ENCODE measurements at regions of chr20 and their contacts with region 1.

Region 1: GRCh38 chr20:25623736-25624499 is at the start of gene NANP:
- DNase-seq: peak; percentile 87 to 94 (median 88)
- ATAC-seq: peak; percentile 89
- H3K4me3 ChIP-seq: peak within 1 kb of the TSS; percentile 59
- H3K27ac ChIP-seq: peak within 1 kb of the TSS; percentile 94
- H3K4me1 ChIP-seq: peaks cover 10 to 21% of the 10 kb centered on the region in 2 experiments; a peak in 4 of 5 replicates
- H3K27me3 ChIP-seq: no peaks in the 10 kb centered on the region
- CTCF ChIP-seq: peak in 1 of 3 experiments; percentile 7; a peak in 2 of 6 replicates
- EP300 ChIP-seq: no peak
- POLR2A ChIP-seq: peak; percentile 92
- RAD21 ChIP-seq: no peak
- polyA plus RNA-seq, gene NANP: 6.9 to 7.9 TPM

Region 2: DNA sequence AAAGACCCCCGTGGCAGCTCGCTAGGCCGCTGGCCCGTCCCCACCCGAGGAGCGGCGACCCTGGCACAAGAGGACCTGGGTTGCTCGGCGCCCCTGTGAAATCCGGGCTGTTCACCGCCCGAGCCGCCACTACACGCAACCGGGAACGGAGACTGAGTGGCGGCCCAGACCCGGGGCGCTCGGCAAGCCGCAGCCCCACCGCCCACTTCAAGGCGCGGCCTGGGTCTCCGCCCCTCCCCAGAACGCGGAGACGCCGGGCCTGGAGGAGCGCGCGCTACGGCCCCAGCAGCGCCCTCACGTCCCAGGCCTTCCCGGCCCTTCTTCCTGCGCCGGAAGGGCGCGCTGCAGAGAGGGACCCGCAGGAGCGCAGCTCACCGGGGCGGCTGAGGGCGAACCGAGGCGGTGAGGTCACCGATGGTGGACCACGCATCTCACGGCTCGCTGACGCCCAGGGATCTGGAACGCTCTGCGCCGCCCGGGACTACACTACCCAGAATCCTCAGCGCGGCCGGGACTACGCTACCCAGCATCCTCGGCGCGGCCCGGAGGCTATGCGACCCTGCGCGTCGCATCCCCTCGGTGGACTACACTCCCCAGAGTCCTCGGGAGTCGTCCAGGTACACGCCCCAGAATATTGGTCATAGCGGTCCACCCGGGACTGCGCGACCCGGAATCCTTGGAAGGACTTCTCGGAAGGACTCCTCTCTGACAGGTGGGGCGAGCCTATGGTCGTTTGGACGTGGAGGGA is 72.6 kb after region 1 on chr20 and contains the start of gene ZNF337:
- CTCF ChIA-PET with region 1: no interaction called
- POLR2A ChIA-PET with region 1: no interaction called
- in situ Hi-C with region 1: no loop called
- intact Hi-C with region 1: loop called (anchors 5 kb)
- DNase-seq: peak; percentile 84 to 95 (median 88)
- ATAC-seq: peak; percentile 99
- H3K4me3 ChIP-seq: peak within 1 kb of the TSS; percentile 76
- H3K27ac ChIP-seq: peak within 1 kb of the TSS; percentile 78
- H3K4me1 ChIP-seq: peaks cover 0 to 7% of the 10 kb centered on the region in 2 experiments; a peak in 1 of 5 replicates
- H3K27me3 ChIP-seq: no peaks in the 10 kb centered on the region
- CTCF ChIP-seq: peak; percentile 19 to 42 (median 28); a peak in 3 of 6 replicates
- EP300 ChIP-seq: no peak
- POLR2A ChIP-seq: peak; percentile 71
- RAD21 ChIP-seq: no peak
- polyA plus RNA-seq, gene ZNF337: 0.25 to 2.3 TPM

Measured in K562 (cell line).